Naive thymus-derived CD4-positive, alpha-beta T cell (primary cell): ENCODE measurements at regions of chr19 and their contacts with region 1.

Region 1: GRCh38 chr19:40139533-40140287 is 49.0 kb upstream of the ZNF780A start:
- DNase-seq: peak in 6 of 9 donors; percentile 38 to 63 (median 55)
- ATAC-seq: peak; percentile 43
- H3K4me3 ChIP-seq: no peak overlapping the region
- H3K4me3 Mint-ChIP-seq: peak overlapping the region in 1 of 10 donors; percentile 16
- H3K27ac ChIP-seq: no peak overlapping the region
- H3K27ac Mint-ChIP-seq: peak overlapping the region in 5 of 9 donors; percentile 0 to 59 (median 31)
- H3K4me1 ChIP-seq: peaks cover 16 to 18% of the 10 kb centered on the region in 2 donors
- H3K4me1 Mint-ChIP-seq: peaks cover 0 to 29% (median 18%) of the 10 kb centered on the region in 7 donors
- H3K27me3 ChIP-seq: no peaks in the 10 kb centered on the region
- H3K27me3 Mint-ChIP-seq: peaks cover 0 to 21% (median 11%) of the 10 kb centered on the region in 5 donors

Region 2: GRCh38 chr19:40006273-40006691 is 133.4 kb before region 1 on chr19:
- CTCF ChIA-PET with region 1: no interaction called
- POLR2A ChIA-PET with region 1: no interaction called
- intact Hi-C with region 1: no loop called
- DNase-seq: no peak
- ATAC-seq: no peak
- H3K4me3 ChIP-seq: no peak overlapping the region
- H3K4me3 Mint-ChIP-seq: no peak overlapping the region
- H3K27ac ChIP-seq: no peak overlapping the region
- H3K27ac Mint-ChIP-seq: no peak overlapping the region
- H3K4me1 ChIP-seq: no peaks in the 10 kb centered on the region
- H3K4me1 Mint-ChIP-seq: peaks cover 0 to 6% (median 0%) of the 10 kb centered on the region in 7 donors
- H3K27me3 ChIP-seq: no peaks in the 10 kb centered on the region
- H3K27me3 Mint-ChIP-seq: no peaks in the 10 kb centered on the region

Region 3: DNA sequence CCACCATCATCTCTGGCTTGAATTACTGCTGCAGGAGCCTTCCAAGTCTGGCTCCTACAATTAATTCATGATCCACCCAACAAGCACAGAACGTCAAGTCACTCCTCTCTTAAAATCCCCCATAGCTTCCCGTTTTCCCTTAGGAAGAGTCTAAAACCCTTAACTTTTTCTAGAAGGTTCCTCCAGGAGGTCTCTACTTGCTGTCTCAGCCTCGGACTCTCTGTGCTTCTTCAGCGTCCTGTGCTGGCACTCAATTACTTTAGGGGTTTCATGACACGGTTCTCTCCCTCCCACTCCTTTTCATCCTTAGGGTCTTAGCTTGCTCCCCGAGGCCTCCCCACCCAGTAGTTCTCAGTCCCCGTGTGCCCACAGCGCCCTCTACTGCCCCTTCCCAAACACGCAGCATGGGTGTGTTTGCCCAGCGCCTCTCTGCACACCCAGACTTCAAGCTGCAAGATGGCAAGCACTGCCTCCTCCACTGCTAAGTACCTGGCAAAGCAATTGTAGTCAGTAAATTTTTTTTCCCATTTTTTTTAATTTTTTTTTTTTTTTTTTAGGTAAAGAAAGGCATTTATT is 25.7 kb after region 1 on chr19:
- CTCF ChIA-PET with region 1: interaction called, 21 read pairs
- POLR2A ChIA-PET with region 1: no interaction called
- intact Hi-C with region 1: loop called (anchors 1 kb)
- DNase-seq: peak; percentile 34 to 67 (median 55)
- ATAC-seq: peak; percentile 82
- H3K4me3 ChIP-seq: no peak overlapping the region
- H3K4me3 Mint-ChIP-seq: peak overlapping the region in 6 of 10 donors; percentile 4 to 55 (median 34)
- H3K27ac ChIP-seq: no peak overlapping the region
- H3K27ac Mint-ChIP-seq: peak overlapping the region in 8 of 9 donors; percentile 24 to 85 (median 68)
- H3K4me1 ChIP-seq: peaks cover 13 to 18% of the 10 kb centered on the region in 2 donors
- H3K4me1 Mint-ChIP-seq: peaks cover 8 to 31% (median 24%) of the 10 kb centered on the region in 7 donors
- H3K27me3 ChIP-seq: no peaks in the 10 kb centered on the region
- H3K27me3 Mint-ChIP-seq: peaks cover 0 to 2% (median 0%) of the 10 kb centered on the region in 5 donors

Region 4: GRCh38 chr19:40221858-40222837 is 82.4 kb after region 1 on chr19:
- CTCF ChIA-PET with region 1: interaction called, 13 read pairs
- POLR2A ChIA-PET with region 1: no interaction called
- intact Hi-C with region 1: loop called (anchors 1 kb)
- DNase-seq: peak; percentile 54 to 86 (median 82)
- ATAC-seq: peak; percentile 92
- H3K4me3 ChIP-seq: no peak overlapping the region
- H3K4me3 Mint-ChIP-seq: peak overlapping the region; percentile 16 to 85 (median 68)
- H3K27ac ChIP-seq: no peak overlapping the region
- H3K27ac Mint-ChIP-seq: peak overlapping the region; percentile 5 to 85 (median 58)
- H3K4me1 ChIP-seq: peaks cover 4 to 20% of the 10 kb centered on the region in 2 donors
- H3K4me1 Mint-ChIP-seq: peaks cover 12 to 30% (median 24%) of the 10 kb centered on the region in 7 donors
- H3K27me3 ChIP-seq: peaks cover 16 to 35% of the 10 kb centered on the region in 2 donors
- H3K27me3 Mint-ChIP-seq: peaks cover 49 to 70% (median 60%) of the 10 kb centered on the region in 5 donors

Region 5: GRCh38 chr19:40425450-40426287 is 286.0 kb after region 1 on chr19 and contains the start of gene SERTAD1:
- CTCF ChIA-PET with region 1: no interaction called
- POLR2A ChIA-PET with region 1: no interaction called
- intact Hi-C with region 1: loop called in 1 of 2 experiments (anchors 5 kb)
- DNase-seq: peak; percentile 99 to 100 (median 100)
- ATAC-seq: peak; percentile 96
- H3K4me3 ChIP-seq: peak within 1 kb of the TSS; percentile 77
- H3K4me3 Mint-ChIP-seq: peak within 1 kb of the TSS; percentile 90 to 99 (median 96)
- H3K27ac ChIP-seq: peak within 1 kb of the TSS; percentile 87
- H3K27ac Mint-ChIP-seq: peak within 1 kb of the TSS; percentile 92 to 100 (median 98)
- H3K4me1 ChIP-seq: peaks cover 15 to 18% of the 10 kb centered on the region in 2 donors
- H3K4me1 Mint-ChIP-seq: peaks cover 12 to 38% (median 24%) of the 10 kb centered on the region in 7 donors
- H3K27me3 ChIP-seq: no peaks in the 10 kb centered on the region
- H3K27me3 Mint-ChIP-seq: peaks cover 0 to 2% (median 0%) of the 10 kb centered on the region in 5 donors
- total RNA-seq, gene SERTAD1: 8.1 to 30.9 (median 13.5) TPM